AG04450 (cell line): ENCODE measurements at regions of chr5 and their contacts with region 1.

Region 1: DNA sequence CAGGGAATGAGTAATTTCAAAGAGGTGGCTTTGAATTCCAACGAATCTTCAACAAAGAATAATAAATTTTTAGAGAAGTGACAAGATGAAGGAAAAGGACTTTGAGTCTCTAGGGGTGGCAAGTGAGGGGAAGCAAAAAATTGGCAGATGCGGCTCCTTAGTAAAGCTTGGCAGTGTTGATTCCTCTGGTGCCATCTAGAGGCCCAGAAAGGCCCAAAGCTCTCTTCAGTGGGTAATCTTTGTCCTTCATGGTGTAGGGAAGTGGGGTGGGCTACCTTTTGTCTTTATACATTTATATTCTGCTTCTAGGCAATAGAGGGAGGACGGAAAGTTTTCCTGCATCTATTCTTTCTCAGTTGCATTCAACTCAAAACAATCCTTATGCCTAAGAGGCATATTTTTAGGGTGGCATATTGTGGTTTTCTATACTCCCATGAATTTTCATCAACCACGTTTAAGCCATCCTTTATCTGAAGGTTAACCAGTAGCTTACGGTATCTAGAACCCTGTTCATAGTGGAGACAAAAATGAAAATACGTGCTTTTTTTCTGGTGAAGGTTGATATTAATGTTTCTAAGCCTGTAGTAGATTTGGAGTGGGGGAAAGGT is 17.5 kb upstream of the ROPN1L start:
- DNase-seq: no peak
- H3K4me3 ChIP-seq: no peak overlapping the region
- H3K27ac ChIP-seq: no peak overlapping the region
- H3K27me3 ChIP-seq: no peaks in the 10 kb centered on the region
- CTCF ChIP-seq: peak; percentile 65

Region 2: DNA sequence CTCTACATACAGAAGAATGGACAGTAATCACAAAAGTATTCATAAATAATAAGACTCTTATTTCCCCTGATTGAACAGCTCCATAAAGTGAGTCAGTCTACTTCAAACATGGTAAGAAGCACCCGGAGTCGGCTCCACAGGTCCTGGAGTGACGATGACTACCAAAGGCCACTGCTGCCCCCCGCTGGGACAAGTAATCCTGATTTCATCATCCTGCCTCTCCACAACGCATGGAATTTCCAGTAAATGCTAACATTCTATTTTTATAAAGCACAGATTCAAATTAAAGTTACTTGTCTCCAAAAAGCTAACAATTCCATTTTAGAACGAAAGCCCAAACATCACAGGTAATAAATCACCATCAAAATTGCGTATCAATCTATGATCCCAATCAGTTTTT is 190.7 kb before region 1 on chr5:
- CTCF ChIA-PET with region 1: no interaction called
- POLR2A ChIA-PET with region 1: no interaction called
- DNase-seq: peak; percentile 84
- H3K4me3 ChIP-seq: no peak overlapping the region
- H3K27ac ChIP-seq: peak overlapping the region; percentile 39
- H3K27me3 ChIP-seq: no peaks in the 10 kb centered on the region
- CTCF ChIP-seq: peak; percentile 48

Region 3: GRCh38 chr5:10377081-10377480 is 47.1 kb before region 1 on chr5:
- CTCF ChIA-PET with region 1: interaction called, 12 read pairs
- POLR2A ChIA-PET with region 1: no interaction called
- DNase-seq: no peak
- H3K4me3 ChIP-seq: no peak overlapping the region
- H3K27ac ChIP-seq: no peak overlapping the region
- H3K27me3 ChIP-seq: no peaks in the 10 kb centered on the region
- CTCF ChIP-seq: no peak